ENCODE measurements at regions of chr12 and their contacts with region 1.

Region 1: DNA sequence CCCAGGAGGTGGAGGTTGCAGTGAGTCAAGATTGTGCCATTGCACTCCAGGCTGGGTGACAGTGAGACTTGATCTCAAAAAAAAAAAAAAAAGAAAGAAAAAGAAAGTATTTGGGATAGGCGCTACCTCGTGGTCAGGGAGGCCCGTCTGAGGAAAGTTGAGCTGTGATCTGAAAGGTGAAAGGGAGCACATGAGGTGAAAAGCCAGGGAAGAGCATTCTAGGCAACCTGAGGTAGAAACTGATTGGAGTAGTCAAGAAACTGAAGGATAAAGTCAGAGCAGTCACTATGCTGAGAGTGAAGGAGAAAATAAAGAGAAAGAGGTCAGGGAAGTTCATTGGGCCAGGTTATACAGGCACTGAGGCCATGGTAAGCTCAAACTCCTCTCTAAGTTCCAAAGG is 7.7 kb downstream of the ANAPC5 start:
- DNase-seq: no peak
- H3K4me3 ChIP-seq: no peak overlapping the region
- CTCF ChIP-seq: no peak
- POLR2A ChIP-seq: no peak

Region 2: GRCh38 chr12:121391619-121392324 is 47.3 kb after region 1 on chr12:
- intact Hi-C with region 1: no loop called
- DNase-seq: peak in 1 of 2 donors; percentile 79
- H3K4me3 ChIP-seq: no peak overlapping the region
- CTCF ChIP-seq: no peak
- POLR2A ChIP-seq: no peak

Region 3: DNA sequence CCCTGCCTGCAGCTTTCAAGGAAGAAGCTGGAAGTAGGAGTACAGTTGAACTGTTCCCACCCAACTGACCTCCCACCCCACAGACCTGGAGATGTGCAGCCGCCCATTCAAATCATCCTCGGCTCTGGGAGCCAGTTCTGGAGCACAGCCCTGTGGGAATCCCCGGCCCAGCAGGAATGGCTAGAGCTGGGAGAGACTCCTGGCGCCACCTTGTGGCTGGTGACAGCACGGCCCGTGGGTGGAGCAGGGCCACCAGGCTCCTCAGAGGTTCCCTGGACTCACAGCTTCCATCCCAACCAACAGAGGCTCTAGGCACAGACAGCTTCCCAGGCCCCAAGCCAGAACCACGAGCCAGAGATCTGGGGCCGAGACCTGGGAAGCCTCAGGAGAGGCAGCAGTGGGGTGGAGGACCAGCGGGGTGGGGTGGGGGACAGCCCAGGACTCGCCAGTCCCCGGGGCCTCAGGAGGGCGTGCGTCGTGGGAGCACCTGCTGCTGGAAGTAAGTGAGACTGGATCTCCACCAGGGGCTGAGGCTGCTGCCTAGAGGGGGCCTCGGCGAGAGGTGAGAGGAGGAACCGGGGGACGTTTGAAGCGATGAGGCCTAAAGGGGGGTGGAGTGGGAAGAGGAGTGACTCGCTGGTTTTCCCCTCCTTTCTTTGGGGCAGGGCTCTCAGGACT is 98.8 kb after region 1 on chr12:
- intact Hi-C with region 1: loop called (anchors 5 kb)
- DNase-seq: peak; percentile 67 to 95
- H3K4me3 ChIP-seq: no peak overlapping the region
- CTCF ChIP-seq: peak in 1 of 3 donors; percentile 24
- POLR2A ChIP-seq: no peak

Measured in lower leg skin (tissue), 4 donors.